GM10248 (cell line): ENCODE measurements at regions of chr11 and their contacts with region 1.

Region 1: GRCh38 chr11:63660972-63661371 is 10.2 kb downstream of the ATL3 start:
- DNase-seq: no peak
- CTCF ChIP-seq: no peak

Region 2: GRCh38 chr11:63502252-63502820 is 158.6 kb before region 1 on chr11:
- CTCF ChIA-PET with region 1: no interaction called
- POLR2A ChIA-PET with region 1: no interaction called
- DNase-seq: no peak
- CTCF ChIP-seq: no peak

Region 3: DNA sequence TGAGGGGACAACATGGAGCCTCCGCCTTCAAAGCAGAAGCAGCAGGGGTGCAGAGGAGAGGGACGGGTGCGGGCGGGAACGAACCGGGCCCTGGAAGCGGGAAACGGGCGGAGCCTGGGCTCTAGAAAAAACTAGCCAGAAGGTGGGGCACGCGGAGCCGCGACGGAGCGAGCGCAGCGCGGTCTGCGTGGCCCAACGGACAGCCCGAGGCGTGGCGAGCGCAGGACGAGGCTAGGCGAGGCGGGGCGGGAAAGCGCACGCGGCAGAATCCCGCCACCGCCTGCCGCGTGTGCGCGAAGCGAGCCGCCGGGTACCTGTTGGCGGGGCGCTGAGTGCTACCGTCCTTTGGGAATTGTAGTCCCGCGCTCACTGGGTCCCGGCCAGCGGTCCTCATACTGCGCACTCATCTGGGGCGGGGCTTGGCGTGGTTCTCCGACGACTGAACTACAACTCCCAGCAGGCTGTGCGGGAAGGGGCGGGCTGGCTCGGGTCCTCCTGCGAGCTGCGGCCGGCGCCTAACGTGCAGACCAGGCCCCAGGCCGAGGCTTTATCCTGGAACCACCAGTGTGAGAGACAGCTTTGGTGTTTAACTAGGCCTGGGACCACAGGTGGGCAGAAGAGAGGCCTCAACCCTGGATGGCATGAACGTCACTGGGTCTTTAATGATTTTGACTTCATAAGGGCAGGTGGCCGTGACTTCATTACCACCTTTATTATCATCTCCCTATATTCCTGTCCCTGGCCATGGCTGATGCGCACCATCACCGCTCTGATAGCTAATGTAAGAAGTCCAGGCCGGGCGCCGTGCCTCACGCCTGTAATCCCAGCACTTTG is 10.6 kb after region 1 on chr11 and contains the start of gene ATL3:
- CTCF ChIA-PET with region 1: interaction called, 19 read pairs
- POLR2A ChIA-PET with region 1: no interaction called
- DNase-seq: peak; percentile 96
- CTCF ChIP-seq: peak; percentile 17